GM13977 (cell line): ENCODE measurements at regions of chr18 and their contacts with region 1.

Region 1: GRCh38 chr18:76405681-76406356 is 89.2 kb downstream of the ZNF516 start:
- DNase-seq: peak; percentile 72
- CTCF ChIP-seq: peak; percentile 58

Region 2: GRCh38 chr18:76126327-76126726 is 279.5 kb before region 1 on chr18:
- in situ Hi-C with region 1: no loop called
- DNase-seq: no peak
- CTCF ChIP-seq: no peak

Region 3: DNA sequence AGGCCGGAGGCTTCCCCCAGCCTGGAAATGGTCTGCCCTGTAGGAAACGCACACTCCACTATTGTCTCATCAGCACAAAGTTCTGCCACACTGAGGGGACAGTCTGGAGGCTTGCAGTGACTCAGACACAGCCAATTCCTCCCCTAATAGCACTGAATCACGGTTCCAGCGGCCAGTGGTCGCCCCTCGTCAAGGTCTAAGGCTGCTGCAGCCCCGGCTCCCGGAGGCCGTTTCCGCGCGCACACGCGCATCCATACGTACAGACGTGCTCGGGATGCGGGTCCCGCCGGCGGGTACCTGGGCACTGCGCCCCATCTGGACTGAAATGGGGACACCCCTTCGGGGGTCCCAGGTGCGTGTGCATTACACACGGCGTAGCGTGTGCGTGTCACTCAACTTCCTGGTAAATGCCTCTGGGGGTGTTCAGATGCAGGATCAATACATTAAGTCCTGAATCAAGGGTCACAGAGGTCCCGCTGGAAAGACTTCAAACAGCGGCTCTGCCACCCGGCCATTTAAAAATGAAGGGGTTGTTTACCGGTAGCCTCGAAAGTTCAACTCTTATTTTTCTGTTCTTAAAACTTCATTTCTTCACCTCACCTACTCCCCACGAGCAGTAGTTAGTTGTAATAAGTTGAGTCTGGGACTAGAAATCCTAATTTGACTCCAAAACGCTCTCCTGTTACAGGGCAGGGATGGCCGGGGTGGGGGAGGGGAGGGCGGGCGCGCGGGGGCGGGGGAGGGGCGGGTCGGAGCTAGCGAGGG is 89.8 kb after region 1 on chr18:
- in situ Hi-C with region 1: no loop called
- DNase-seq: peak; percentile 46
- CTCF ChIP-seq: no peak

Region 4: GRCh38 chr18:76709659-76710645 is 304.1 kb after region 1 on chr18:
- in situ Hi-C with region 1: loop called (anchors 10 kb)
- DNase-seq: peak; percentile 79
- CTCF ChIP-seq: peak; percentile 88